Heart left ventricle (tissue), 16 donors: ENCODE measurements at regions of chr19 and their contacts with region 1.

Region 1: DNA sequence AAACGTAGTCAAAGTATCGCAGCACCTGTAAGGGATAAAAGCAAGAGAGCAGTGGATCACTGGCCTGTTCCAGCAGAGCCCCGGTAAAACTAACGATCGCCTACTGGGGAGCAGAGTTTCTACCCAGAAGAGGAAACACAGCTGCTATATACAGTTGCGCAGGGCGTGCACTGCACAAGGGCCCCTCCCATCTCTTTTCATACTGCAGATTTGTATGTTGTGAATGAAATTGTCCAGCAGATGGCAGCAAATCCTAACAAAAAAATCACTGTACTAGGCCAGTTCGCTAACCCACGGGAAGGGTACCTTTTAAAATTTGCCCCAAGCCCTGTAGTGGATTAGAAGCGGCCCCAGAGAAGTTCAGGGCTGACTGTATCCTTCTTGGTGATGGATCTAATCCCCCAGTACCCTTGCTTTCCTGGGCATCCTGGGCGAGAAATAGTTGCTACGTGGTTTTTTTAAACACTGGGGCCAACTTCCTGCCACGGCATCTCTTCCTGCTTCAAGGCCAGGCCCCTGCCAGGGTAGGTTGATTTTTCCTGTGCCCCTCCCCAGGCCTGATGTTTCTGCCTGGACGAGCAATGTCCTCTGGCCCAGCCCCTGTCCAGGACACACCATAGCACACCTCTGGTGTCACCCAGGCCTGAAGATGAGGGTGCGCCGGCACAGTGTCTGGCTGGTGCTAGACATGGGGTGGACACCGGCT is 127.0 kb downstream of the IER2 start:
- DNase-seq: peak in 3 of 5 donors; percentile 46 to 50 (median 49)
- ATAC-seq: peak; percentile 79 to 96 (median 90)
- H3K4me3 ChIP-seq: peak overlapping the region in 1 of 12 donors; percentile 15
- H3K27ac ChIP-seq: peak overlapping the region in 1 of 12 donors; percentile 52
- H3K4me1 ChIP-seq: peaks cover 0 to 9% (median 0%) of the 10 kb centered on the region in 12 donors
- H3K27me3 ChIP-seq: peaks cover 0 to 13% (median 0%) of the 10 kb centered on the region in 9 donors
- CTCF ChIP-seq: peak; percentile 55 to 75 (median 68)
- POLR2A ChIP-seq: no peak

Region 2: DNA sequence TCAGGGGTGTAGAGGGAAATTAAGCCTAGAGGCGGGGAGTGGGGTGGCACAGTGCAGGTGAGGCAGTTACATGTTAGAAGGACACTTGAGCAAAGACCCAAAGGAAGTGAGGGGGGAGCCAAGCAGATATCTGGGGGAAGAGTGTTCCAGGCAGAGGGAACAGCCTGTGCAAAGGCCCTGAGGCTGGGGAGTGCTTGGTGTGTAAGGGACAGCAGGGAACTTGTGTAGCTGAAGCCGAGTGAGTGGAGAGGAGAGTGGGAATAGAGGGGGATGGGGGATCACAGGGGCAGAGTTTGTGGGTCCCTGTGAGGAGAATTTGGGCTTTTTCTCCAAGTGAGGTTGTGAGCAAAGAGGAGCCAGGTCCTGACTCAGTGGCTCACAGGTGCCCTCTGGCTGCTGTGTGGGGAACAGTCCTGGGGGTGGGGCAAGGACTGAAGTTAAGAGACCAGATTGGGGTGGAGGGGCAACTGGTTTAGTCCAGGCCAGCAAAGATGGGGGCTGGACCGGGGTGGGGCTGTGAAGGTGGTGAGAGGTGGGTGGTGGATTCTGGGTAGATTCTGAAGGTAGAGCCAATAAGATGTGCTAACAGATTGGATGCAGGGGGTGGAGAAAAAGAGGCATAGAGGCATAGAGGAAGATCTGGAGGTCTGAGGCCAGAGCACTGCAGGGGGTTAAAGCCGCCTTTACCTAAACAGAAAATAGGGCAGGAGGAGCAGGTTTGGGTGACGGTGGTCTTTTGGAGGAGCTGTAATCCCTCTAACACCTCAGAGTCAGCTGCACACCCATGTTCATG is 153.7 kb after region 1 on chr19:
- intact Hi-C with region 1: loop called in 9 of 10 experiments (anchors 2 to 5 kb)
- DNase-seq: peak in 2 of 5 donors; percentile 19 to 24
- ATAC-seq: peak in 2 of 4 donors; percentile 42 to 45
- H3K4me3 ChIP-seq: no peak overlapping the region
- H3K27ac ChIP-seq: no peak overlapping the region
- H3K4me1 ChIP-seq: peaks cover 0 to 4% (median 0%) of the 10 kb centered on the region in 12 donors
- H3K27me3 ChIP-seq: no peaks in the 10 kb centered on the region
- CTCF ChIP-seq: peak; percentile 40 to 64 (median 51)
- POLR2A ChIP-seq: no peak

Region 3: DNA sequence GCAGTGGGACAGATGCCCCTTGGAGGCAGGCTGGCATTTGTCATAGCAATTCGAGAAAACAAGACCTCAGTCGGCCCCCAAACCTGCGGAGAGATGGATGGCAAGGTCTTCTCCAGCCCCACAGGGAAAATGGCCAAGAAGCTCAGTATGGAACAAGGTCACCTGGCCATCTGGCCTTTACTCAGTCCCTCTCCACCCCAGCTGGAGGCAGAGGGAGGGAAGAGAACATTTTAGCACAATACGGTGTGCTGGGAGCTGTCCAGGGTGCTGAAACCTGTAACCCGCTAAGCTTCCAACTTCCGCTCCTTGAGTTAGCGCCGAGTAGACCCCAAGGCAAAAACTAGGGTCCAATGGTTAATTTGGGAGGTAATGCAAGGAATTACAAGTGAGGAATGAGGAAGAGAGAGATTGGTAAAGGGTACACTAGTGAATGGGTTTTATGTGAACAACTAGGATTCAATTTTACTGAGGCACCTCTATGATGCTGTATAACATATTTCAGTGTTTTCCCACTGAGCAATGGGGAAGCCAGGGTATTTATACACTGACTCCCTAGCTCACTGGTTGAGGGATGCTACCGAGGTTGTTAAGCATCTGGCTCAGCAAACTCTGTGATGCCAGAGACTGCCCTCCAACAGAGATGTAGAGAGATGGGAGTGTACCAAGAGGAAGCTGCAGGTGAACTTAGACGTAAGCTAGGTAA is 164.7 kb after region 1 on chr19:
- intact Hi-C with region 1: loop called in 1 of 10 experiments (anchors 5 kb)
- DNase-seq: peak in 2 of 5 donors; percentile 20 to 32
- ATAC-seq: peak in 1 of 4 donors; percentile 18
- H3K4me3 ChIP-seq: no peak overlapping the region
- H3K27ac ChIP-seq: no peak overlapping the region
- H3K4me1 ChIP-seq: no peaks in the 10 kb centered on the region
- H3K27me3 ChIP-seq: no peaks in the 10 kb centered on the region
- CTCF ChIP-seq: no peak
- POLR2A ChIP-seq: no peak

Region 4: GRCh38 chr19:13588957-13589833 is 311.9 kb after region 1 on chr19:
- intact Hi-C with region 1: loop called (anchors 1 to 5 kb)
- DNase-seq: peak; percentile 54 to 87 (median 65)
- ATAC-seq: peak in 3 of 4 donors; percentile 73 to 92 (median 83)
- H3K4me3 ChIP-seq: no peak overlapping the region
- H3K27ac ChIP-seq: no peak overlapping the region
- H3K4me1 ChIP-seq: no peaks in the 10 kb centered on the region
- H3K27me3 ChIP-seq: peaks cover 0 to 67% (median 8%) of the 10 kb centered on the region in 9 donors
- CTCF ChIP-seq: peak; percentile 89 to 100 (median 96)
- POLR2A ChIP-seq: no peak

Region 5: DNA sequence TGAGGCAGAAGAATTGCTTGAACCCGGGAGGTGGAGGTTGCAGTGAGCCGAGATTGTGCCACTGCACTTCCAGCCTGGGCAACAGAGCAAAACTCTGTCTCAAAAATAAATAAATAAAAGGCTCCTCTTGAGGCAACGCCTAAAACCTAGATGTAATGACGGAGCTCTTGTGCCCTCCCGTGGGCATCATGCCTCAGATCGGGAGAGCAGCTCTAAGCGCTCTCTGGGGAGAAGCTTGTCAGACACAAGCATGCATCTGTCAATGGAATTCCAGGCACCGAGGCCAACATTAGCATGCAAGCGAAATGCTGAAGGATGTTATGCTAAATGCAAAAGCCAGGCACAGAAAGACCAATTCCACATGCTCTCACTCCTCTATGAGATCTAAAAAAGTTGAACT is 441.5 kb after region 1 on chr19:
- intact Hi-C with region 1: loop called in 7 of 10 experiments (anchors 5 to 10 kb)
- DNase-seq: peak in 3 of 5 donors; percentile 25 to 58 (median 33)
- ATAC-seq: peak in 3 of 4 donors; percentile 81 to 85 (median 81)
- H3K4me3 ChIP-seq: no peak overlapping the region
- H3K27ac ChIP-seq: no peak overlapping the region
- H3K4me1 ChIP-seq: no peaks in the 10 kb centered on the region
- H3K27me3 ChIP-seq: peaks cover 0 to 11% (median 0%) of the 10 kb centered on the region in 9 donors
- CTCF ChIP-seq: peak in 10 of 12 donors; percentile 19 to 50 (median 36)
- POLR2A ChIP-seq: no peak